ENCODE measurements at regions of chr7 and their contacts with region 1.

Region 1: GRCh38 chr7:92621026-92621540 is 30.9 kb upstream of the FAM133B start:
- DNase-seq: peak; percentile 93
- H3K4me3 Mint-ChIP-seq: peak overlapping the region; percentile 4
- H3K27ac Mint-ChIP-seq: peak overlapping the region; percentile 80
- H3K4me1 Mint-ChIP-seq: peaks cover 46% of the 10 kb centered on the region
- H3K27me3 Mint-ChIP-seq: no peaks in the 10 kb centered on the region

Region 2: GRCh38 chr7:92633211-92633906 is 12.3 kb after region 1 on chr7:
- CTCF ChIA-PET with region 1: interaction called, 13 read pairs
- intact Hi-C with region 1: loop called (anchors 1 kb)
- DNase-seq: peak; percentile 49
- H3K4me3 Mint-ChIP-seq: no peak overlapping the region
- H3K27ac Mint-ChIP-seq: peak overlapping the region; percentile 92
- H3K4me1 Mint-ChIP-seq: peaks cover 84% of the 10 kb centered on the region
- H3K27me3 Mint-ChIP-seq: no peaks in the 10 kb centered on the region

Region 3: DNA sequence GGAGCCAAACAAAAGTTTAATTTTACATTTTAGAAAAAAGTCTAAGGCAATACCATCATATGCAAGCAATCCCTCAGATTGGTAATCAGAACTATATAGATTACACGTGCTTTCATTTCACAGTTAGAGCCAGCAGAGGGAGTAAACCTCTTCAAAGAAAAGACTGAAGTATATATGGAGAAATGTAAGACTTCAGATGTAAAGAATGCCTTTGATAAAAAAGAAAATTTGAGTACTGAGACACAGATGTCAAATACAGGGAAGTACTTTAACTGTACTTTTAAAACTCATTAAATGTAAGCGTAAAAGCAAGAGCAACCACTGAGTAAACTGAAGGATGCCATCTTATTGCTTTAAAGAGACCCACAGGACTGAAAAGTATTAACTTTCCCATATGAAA is 70.5 kb after region 1 on chr7:
- CTCF ChIA-PET with region 1: interaction called, 13 read pairs
- intact Hi-C with region 1: loop called (anchors 1 kb)
- DNase-seq: peak; percentile 46
- H3K4me3 Mint-ChIP-seq: no peak overlapping the region
- H3K27ac Mint-ChIP-seq: peak overlapping the region; percentile 87
- H3K4me1 Mint-ChIP-seq: peaks cover 70% of the 10 kb centered on the region
- H3K27me3 Mint-ChIP-seq: no peaks in the 10 kb centered on the region

Region 4: GRCh38 chr7:93036807-93037206 is 415.7 kb after region 1 on chr7:
- CTCF ChIA-PET with region 1: interaction called, 3 read pairs
- intact Hi-C with region 1: loop called (anchors 1 kb)
- DNase-seq: peak; percentile 74
- H3K4me3 Mint-ChIP-seq: no peak overlapping the region
- H3K27ac Mint-ChIP-seq: peak overlapping the region; percentile 59
- H3K4me1 Mint-ChIP-seq: peaks cover 22% of the 10 kb centered on the region
- H3K27me3 Mint-ChIP-seq: no peaks in the 10 kb centered on the region

Region 5: GRCh38 chr7:93117852-93118530 is 496.9 kb after region 1 on chr7 and contains the start of gene SAMD9:
- CTCF ChIA-PET with region 1: no interaction called
- intact Hi-C with region 1: loop called (anchors 2 kb)
- DNase-seq: peak; percentile 70
- H3K4me3 Mint-ChIP-seq: peak within 1 kb of the TSS; percentile 71
- H3K27ac Mint-ChIP-seq: peak within 1 kb of the TSS; percentile 65
- H3K4me1 Mint-ChIP-seq: peaks cover 47% of the 10 kb centered on the region
- H3K27me3 Mint-ChIP-seq: no peaks in the 10 kb centered on the region
- total RNA-seq, gene SAMD9: 2.9 to 3.1 TPM